ENCODE measurements at regions of chr4 and their contacts with region 1.

Region 1: DNA sequence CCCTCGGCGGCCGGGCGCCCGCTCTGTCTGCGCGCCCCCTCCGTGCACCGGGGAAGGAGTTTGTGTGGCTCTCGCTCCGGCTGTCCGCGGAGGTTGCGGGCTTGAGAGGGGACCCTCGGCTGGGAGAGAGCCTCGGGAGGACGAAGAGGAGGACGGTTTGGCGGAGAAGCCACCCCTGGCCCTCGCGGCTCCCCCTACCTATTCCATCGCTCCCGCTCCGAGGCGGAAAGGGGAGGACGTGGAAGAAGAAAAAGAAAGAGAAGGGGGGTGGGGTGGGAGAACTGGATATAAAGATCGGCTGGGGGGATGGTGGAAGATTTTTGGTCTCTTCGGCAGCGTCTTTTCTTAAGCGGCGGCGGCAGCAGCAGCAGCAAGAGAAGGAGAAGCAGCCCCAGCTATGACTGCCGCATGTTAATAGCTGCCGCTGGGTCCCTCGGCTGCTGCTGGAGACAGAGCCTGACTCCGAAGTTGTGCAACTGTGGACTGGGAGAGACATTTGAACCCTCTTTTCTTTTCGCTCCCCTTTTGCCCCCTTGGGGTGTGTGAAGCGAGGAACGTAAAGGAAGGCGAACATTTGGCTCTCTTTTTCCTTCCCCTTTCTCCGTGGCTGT is 895 bp downstream of the ADGRL3 start:
- DNase-seq: no peak
- H3K4me3 ChIP-seq: peak overlapping the region; percentile 53 to 66 (median 55)
- H3K27ac ChIP-seq: no peak overlapping the region
- H3K4me1 ChIP-seq: no peaks in the 10 kb centered on the region
- H3K27me3 ChIP-seq: peaks cover 3 to 30% of the 10 kb centered on the region in 2 donors
- CTCF ChIP-seq: no peak
- POLR2A ChIP-seq: no peak

Region 2: GRCh38 chr4:61182915-61183314 is 18.1 kb before region 1 on chr4:
- intact Hi-C with region 1: loop called (anchors 1 kb)
- DNase-seq: no peak
- H3K4me3 ChIP-seq: no peak overlapping the region
- H3K27ac ChIP-seq: no peak overlapping the region
- H3K4me1 ChIP-seq: no peaks in the 10 kb centered on the region
- H3K27me3 ChIP-seq: no peaks in the 10 kb centered on the region
- CTCF ChIP-seq: no peak
- POLR2A ChIP-seq: no peak

Region 3: DNA sequence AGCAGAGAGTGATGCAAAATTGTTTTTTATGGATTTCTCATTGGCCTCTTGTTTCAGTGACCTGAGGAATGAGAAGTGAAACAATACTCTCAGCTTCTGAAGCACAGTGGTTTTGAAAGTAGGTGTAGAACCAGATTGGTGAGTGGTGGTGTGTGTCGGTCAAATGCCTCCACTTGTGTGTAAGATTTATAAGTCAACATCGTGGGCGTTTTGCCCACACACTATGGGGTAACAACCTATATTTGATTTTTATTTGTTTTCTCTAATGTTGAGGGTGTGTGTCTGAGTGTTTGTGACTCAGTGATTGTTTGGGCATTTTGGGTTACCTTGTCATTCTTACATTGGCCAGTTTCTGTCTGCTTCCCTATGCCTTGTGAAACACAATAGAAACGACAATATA is 22.4 kb after region 1 on chr4:
- intact Hi-C with region 1: loop called (anchors 1 kb)
- DNase-seq: no peak
- H3K4me3 ChIP-seq: no peak overlapping the region
- H3K27ac ChIP-seq: no peak overlapping the region
- H3K4me1 ChIP-seq: no peaks in the 10 kb centered on the region
- H3K27me3 ChIP-seq: no peaks in the 10 kb centered on the region
- CTCF ChIP-seq: no peak
- POLR2A ChIP-seq: no peak

Region 4: DNA sequence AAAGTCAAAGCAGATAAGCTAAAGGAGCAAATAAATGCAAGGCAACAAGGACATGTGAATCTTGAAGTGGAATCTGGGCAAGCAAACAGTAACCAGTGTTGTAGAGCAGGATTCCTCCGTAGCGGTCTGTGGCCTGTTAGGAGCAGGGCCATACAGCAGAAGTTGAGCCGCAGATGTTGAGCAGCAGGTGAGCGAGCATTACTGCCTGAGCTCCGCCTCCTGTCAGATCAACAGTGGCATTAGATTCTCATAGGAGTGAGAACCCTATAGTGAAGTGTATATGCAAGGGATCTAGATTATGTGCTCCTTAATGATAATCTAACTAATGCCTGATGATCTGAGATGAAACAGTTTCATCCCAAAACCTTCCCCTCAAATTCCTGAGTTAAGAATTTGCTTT is 549.8 kb after region 1 on chr4:
- intact Hi-C with region 1: loop called (anchors 5 kb)
- DNase-seq: no peak
- H3K4me3 ChIP-seq: no peak overlapping the region
- H3K27ac ChIP-seq: no peak overlapping the region
- H3K4me1 ChIP-seq: no peaks in the 10 kb centered on the region
- H3K27me3 ChIP-seq: no peaks in the 10 kb centered on the region
- CTCF ChIP-seq: no peak
- POLR2A ChIP-seq: no peak